Endothelial cell of umbilical vein (primary cell): ENCODE measurements at regions of chr2 and their contacts with region 1.

Region 1: GRCh38 chr2:44479122-44479887 is 117.6 kb downstream of the CAMKMT start:
- DNase-seq: peak; percentile 89
- H3K4me3 ChIP-seq: no peak overlapping the region
- H3K27ac ChIP-seq: no peak overlapping the region
- H3K4me1 ChIP-seq: no peaks in the 10 kb centered on the region
- H3K27me3 ChIP-seq: no peaks in the 10 kb centered on the region
- CTCF ChIP-seq: peak; percentile 97 to 99
- POLR2A ChIP-seq: no peak

Region 2: GRCh38 chr2:44397447-44398175 is 81.7 kb before region 1 on chr2:
- CTCF ChIA-PET with region 1: interaction called, 172 read pairs
- POLR2A ChIA-PET with region 1: no interaction called
- dilution Hi-C with region 1: no loop called
- intact Hi-C with region 1: loop called (anchors 1 kb)
- DNase-seq: no peak
- H3K4me3 ChIP-seq: no peak overlapping the region
- H3K27ac ChIP-seq: no peak overlapping the region
- H3K4me1 ChIP-seq: no peaks in the 10 kb centered on the region
- H3K27me3 ChIP-seq: no peaks in the 10 kb centered on the region
- CTCF ChIP-seq: no peak
- POLR2A ChIP-seq: no peak

Region 3: DNA sequence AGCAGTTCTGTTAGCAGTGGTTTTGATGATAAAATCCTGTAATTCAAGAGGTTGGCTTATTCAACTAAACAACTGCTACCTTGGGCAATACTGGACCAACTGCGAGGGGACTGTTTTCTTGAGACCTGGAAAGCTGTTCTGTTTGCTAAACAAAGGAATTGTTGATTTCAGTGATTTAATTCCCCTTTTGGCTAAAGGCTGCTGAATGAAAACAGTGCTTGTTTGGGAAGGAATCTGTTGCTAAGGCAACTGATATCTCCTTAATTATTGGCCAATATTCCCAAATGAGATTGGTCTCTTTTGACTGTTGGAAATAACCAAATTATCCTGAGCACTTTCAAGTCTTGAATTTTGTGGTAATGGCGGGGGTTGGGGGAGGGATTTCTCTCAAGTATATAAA is 19.2 kb after region 1 on chr2:
- CTCF ChIA-PET with region 1: interaction called, 47 read pairs
- POLR2A ChIA-PET with region 1: no interaction called
- dilution Hi-C with region 1: no loop called
- intact Hi-C with region 1: no loop called
- DNase-seq: no peak
- H3K4me3 ChIP-seq: no peak overlapping the region
- H3K27ac ChIP-seq: no peak overlapping the region
- H3K4me1 ChIP-seq: no peaks in the 10 kb centered on the region
- H3K27me3 ChIP-seq: no peaks in the 10 kb centered on the region
- CTCF ChIP-seq: no peak
- POLR2A ChIP-seq: no peak

Region 4: DNA sequence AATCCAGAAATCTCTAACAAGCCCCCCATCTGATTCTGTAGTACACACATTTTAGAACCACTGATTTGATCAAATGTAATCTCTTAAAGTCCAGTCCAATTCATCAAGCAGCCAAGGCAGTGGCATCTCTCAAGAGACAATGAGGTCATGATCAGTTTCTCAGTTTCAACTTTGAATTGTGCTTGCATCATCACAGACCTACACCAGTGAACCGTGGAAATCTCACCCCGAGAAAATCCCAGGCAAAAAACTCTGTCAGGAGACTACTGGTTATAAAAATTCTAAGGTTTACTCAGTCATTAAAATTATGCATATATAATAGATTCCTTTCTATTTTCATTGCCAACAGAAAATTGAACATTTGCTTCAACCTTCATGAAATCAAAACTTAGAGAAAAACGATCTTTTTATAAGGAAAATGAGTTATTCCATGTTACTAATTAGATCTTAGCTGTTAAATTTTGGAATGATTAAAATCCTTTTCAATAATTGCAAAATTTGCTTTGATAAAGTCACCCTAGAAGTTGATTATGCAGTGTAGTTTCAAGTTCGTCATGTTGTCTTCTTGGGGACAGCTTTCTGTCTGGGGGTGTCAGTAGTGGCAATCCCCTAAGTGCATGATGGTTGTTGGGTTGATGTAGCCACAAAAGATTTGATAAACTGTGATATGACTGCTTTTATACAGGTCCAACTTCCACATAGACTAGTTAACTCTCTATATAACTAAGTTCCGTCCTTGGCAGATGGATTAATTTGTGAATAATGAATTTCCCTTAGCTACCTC is 117.4 kb after region 1 on chr2:
- CTCF ChIA-PET with region 1: interaction called, 10 read pairs
- POLR2A ChIA-PET with region 1: no interaction called
- dilution Hi-C with region 1: no loop called
- intact Hi-C with region 1: no loop called
- DNase-seq: no peak
- H3K4me3 ChIP-seq: no peak overlapping the region
- H3K27ac ChIP-seq: no peak overlapping the region
- H3K4me1 ChIP-seq: peaks cover 6% of the 10 kb centered on the region
- H3K27me3 ChIP-seq: no peaks in the 10 kb centered on the region
- CTCF ChIP-seq: no peak
- POLR2A ChIP-seq: no peak

Region 5: DNA sequence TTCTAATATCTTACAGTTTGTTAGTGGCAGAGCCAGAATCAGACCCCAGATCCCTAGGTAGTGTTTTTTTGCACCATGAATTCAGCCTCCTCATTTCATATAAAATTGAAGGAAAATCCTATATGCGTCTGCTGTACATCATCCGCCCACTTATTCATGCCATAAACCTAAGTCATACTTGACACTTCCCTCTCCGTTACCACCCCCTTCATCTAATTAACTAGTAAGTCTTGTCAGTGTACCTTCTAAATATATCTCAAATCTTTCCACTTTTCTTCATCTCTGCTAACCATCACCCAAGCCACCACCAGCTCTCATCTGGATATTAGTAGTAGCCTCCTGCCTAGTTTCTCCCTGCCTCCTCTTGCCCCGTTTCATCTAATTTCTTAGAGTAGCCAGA is 213.5 kb after region 1 on chr2:
- CTCF ChIA-PET with region 1: interaction called, 14 read pairs
- POLR2A ChIA-PET with region 1: no interaction called
- dilution Hi-C with region 1: no loop called
- intact Hi-C with region 1: no loop called
- DNase-seq: no peak
- H3K4me3 ChIP-seq: no peak overlapping the region
- H3K27ac ChIP-seq: no peak overlapping the region
- H3K4me1 ChIP-seq: no peaks in the 10 kb centered on the region
- H3K27me3 ChIP-seq: no peaks in the 10 kb centered on the region
- CTCF ChIP-seq: no peak
- POLR2A ChIP-seq: no peak

Region 6: DNA sequence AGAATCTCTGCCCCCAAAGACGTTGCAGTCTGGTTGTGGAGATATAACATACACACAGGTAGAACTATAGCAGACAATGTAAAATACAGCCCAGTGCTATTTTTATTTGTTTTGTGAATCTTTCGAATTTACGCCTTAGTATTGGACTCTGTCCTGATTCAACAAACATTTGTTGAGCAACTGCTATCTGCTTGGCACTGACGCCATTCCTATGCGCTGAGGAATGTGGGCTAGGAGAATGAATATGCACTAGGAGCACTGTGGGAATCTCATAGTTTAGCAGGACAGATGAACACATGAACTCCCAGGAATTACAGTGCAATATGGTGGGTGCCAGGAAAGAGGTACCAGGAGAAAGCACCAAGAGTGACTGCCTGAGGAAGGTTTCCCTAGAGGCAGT is 280.5 kb after region 1 on chr2:
- CTCF ChIA-PET with region 1: interaction called, 10 read pairs
- POLR2A ChIA-PET with region 1: no interaction called
- dilution Hi-C with region 1: no loop called
- intact Hi-C with region 1: no loop called
- DNase-seq: no peak
- H3K4me3 ChIP-seq: no peak overlapping the region
- H3K27ac ChIP-seq: no peak overlapping the region
- H3K4me1 ChIP-seq: no peaks in the 10 kb centered on the region
- H3K27me3 ChIP-seq: peaks cover 0 to 5% of the 10 kb centered on the region in 2 experiments
- CTCF ChIP-seq: no peak
- POLR2A ChIP-seq: no peak

Region 7: DNA sequence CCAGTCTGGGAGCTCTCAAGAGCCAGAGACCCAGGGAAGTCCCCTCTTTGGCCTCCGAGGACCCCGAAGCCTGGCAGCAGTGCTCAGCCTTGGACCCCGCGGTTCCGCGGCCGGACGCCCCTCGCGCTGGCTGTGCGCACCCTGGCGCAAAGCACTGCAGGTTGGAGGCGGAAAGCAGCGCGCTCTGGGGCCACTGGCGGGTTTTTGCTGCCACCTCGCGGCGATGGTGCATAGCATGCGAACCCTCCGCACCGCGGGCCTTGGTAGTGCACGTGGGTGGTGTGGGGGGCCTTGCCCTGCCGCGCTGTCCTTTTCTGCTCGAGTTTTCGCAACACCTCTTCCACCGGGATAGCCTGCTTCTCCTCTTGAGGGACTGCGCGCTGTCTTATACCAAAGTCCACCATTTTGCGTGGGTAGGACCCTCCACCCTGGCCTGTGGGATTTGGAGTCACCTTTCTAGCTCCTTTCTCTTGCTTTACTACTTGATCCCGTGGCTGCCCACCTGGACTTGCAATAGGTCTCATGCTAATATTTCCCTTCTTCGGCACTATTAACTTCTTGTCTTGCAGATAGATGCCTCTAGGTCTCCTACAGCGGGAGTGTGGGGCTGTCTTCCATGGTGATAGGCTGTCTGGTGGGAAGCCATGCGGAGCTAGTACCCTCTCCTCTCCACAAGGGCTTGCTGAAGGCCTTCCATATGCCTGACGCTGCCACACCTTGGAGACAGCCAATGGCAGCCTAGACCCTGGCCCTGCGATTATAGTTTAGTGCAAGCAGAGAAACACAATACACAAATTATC is 476.5 kb after region 1 on chr2:
- CTCF ChIA-PET with region 1: interaction called, 165 read pairs
- POLR2A ChIA-PET with region 1: no interaction called
- dilution Hi-C with region 1: no loop called
- intact Hi-C with region 1: loop called (anchors 1 kb)
- DNase-seq: peak; percentile 60
- H3K4me3 ChIP-seq: no peak overlapping the region
- H3K27ac ChIP-seq: no peak overlapping the region
- H3K4me1 ChIP-seq: peaks cover 16% of the 10 kb centered on the region
- H3K27me3 ChIP-seq: peaks cover 47 to 52% of the 10 kb centered on the region in 2 experiments
- CTCF ChIP-seq: peak; percentile 86 to 97
- POLR2A ChIP-seq: no peak

Region 8: GRCh38 chr2:45169339-45170190 is 690.3 kb after region 1 on chr2:
- CTCF ChIA-PET with region 1: no interaction called
- POLR2A ChIA-PET with region 1: no interaction called
- dilution Hi-C with region 1: no loop called
- intact Hi-C with region 1: no loop called
- DNase-seq: peak; percentile 50
- H3K4me3 ChIP-seq: peak overlapping the region; percentile 61 to 77 (median 64)
- H3K27ac ChIP-seq: no peak overlapping the region
- H3K4me1 ChIP-seq: peaks cover 9% of the 10 kb centered on the region
- H3K27me3 ChIP-seq: peaks cover 5 to 13% of the 10 kb centered on the region in 2 experiments
- CTCF ChIP-seq: no peak
- POLR2A ChIP-seq: peak; percentile 68

Region 9: GRCh38 chr2:46117379-46117778 is 1638.1 kb after region 1 on chr2:
- CTCF ChIA-PET with region 1: no interaction called
- POLR2A ChIA-PET with region 1: no interaction called
- dilution Hi-C with region 1: no loop called
- intact Hi-C with region 1: no loop called
- DNase-seq: peak; percentile 52
- H3K4me3 ChIP-seq: no peak overlapping the region
- H3K27ac ChIP-seq: peak overlapping the region; percentile 78
- H3K4me1 ChIP-seq: peaks cover 51% of the 10 kb centered on the region
- H3K27me3 ChIP-seq: no peaks in the 10 kb centered on the region
- CTCF ChIP-seq: no peak
- POLR2A ChIP-seq: no peak